ENCODE measurements at regions of chr7 and their contacts with region 1.

Region 1: GRCh38 chr7:29622335-29623265 is 59.0 kb downstream of the PRR15 start:
- DNase-seq: peak; percentile 93
- ATAC-seq: peak; percentile 96
- H3K4me3 ChIP-seq: no peak overlapping the region; a peak in 1 of 4 replicates
- H3K27ac ChIP-seq: no peak overlapping the region
- H3K4me1 ChIP-seq: 0 out of 2 replicates have a peak, but pooled peaks cover 6% of the 10 kb centered on the region
- H3K27me3 ChIP-seq: no peaks in the 10 kb centered on the region
- CTCF ChIP-seq: no peak

Region 2: DNA sequence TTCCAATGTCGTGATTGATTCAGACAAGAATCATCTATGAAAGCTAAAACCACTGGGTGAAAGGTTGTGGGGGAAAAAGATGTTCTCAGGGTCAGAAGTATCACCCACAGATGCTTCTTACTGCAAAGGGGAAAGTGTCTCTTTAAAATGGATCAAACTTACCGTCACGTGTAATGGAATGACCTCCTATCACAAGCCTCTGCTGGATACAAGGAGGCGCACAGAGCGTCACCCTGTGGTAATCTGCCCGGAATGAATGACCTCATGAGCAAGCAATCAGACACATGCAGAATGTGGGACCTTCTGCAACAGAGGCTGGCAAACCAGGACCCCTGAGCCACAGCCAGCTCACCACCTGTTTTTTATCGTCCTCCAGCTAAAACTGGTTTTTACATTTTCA is 216.7 kb after region 1 on chr7:
- CTCF ChIA-PET with region 1: interaction called, 12 read pairs
- POLR2A ChIA-PET with region 1: no interaction called
- in situ Hi-C with region 1: no loop called
- intact Hi-C with region 1: no loop called
- DNase-seq: no peak
- ATAC-seq: peak; percentile 84; the same call in 1 of the 2 replicates
- H3K4me3 ChIP-seq: no peak overlapping the region
- H3K27ac ChIP-seq: no peak overlapping the region
- H3K4me1 ChIP-seq: no peaks in the 10 kb centered on the region
- H3K27me3 ChIP-seq: no peaks in the 10 kb centered on the region; the same call in 1 of the 2 replicates
- CTCF ChIP-seq: peak; percentile 29; the same call in 1 of the 2 replicates